Pancreas (tissue), 10 donors: ENCODE measurements at regions of chr4 and their contacts with region 1.

Region 1: GRCh38 chr4:144174401-144175067 is 34.0 kb upstream of the GYPA start:
- DNase-seq: no peak
- ATAC-seq: peak; percentile 58 to 88 (median 84)
- H3K4me3 ChIP-seq: no peak overlapping the region
- H3K27ac ChIP-seq: no peak overlapping the region
- H3K4me1 ChIP-seq: no peaks in the 10 kb centered on the region
- H3K27me3 ChIP-seq: peaks cover 0 to 3% (median 0%) of the 10 kb centered on the region in 4 donors
- CTCF ChIP-seq: peak in 2 of 4 donors; percentile 14 to 40

Region 2: GRCh38 chr4:144090744-144091143 is 83.8 kb before region 1 on chr4:
- intact Hi-C with region 1: no loop called
- DNase-seq: no peak
- ATAC-seq: no peak
- H3K4me3 ChIP-seq: no peak overlapping the region
- H3K27ac ChIP-seq: no peak overlapping the region
- H3K4me1 ChIP-seq: no peaks in the 10 kb centered on the region
- H3K27me3 ChIP-seq: no peaks in the 10 kb centered on the region
- CTCF ChIP-seq: no peak

Region 3: GRCh38 chr4:144583658-144584057 is 409.1 kb after region 1 on chr4:
- intact Hi-C with region 1: no loop called
- DNase-seq: no peak
- ATAC-seq: peak in 1 of 4 donors; percentile 20
- H3K4me3 ChIP-seq: no peak overlapping the region
- H3K27ac ChIP-seq: no peak overlapping the region
- H3K4me1 ChIP-seq: no peaks in the 10 kb centered on the region
- H3K27me3 ChIP-seq: no peaks in the 10 kb centered on the region
- CTCF ChIP-seq: no peak

Region 4: GRCh38 chr4:145061318-145061920 is 886.9 kb after region 1 on chr4:
- intact Hi-C with region 1: loop called in 1 of 3 experiments (anchors 10 kb)
- DNase-seq: no peak
- ATAC-seq: peak; percentile 53 to 79 (median 78)
- H3K4me3 ChIP-seq: no peak overlapping the region
- H3K27ac ChIP-seq: no peak overlapping the region
- H3K4me1 ChIP-seq: peaks cover 11 to 13% (median 11%) of the 10 kb centered on the region in 3 donors
- H3K27me3 ChIP-seq: no peaks in the 10 kb centered on the region
- CTCF ChIP-seq: peak in 2 of 4 donors; percentile 32 to 35